ENCODE measurements at regions of chr20 and their contacts with region 1.

Region 1: DNA sequence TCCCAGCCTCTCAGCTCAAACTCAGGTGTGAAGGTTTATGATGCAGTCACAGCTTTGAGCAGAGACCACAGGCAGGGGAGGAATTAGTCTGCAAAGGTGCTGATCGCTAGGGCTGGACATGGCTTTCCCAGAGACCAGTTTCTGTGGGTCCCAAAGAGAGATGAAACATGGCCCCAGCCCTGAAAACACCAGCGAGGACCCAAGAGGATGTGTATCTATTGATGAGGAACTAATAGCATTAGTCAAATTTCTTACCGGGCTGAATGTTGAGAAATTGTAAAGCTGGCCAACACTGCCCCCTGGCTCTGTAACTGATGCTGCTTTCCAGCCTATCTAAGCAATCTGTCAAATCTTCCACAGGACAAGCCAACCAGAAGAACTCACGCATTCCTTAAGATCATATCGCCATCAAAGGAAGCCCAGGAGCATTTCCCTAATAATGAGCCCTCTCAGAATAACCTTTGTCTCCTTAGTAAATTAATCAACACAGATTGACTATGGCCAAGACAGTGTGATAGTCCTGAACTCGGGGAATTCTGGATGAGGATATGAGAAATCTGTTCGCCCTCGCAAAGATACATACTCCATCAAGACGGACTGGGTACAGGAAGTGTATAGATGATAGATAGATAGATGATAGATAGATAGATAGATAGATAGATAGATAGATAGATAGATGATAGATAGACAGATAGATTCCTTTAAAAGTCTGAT is 7.8 kb upstream of the ACSS1 start:
- DNase-seq: no peak
- ATAC-seq: peak; percentile 80 to 90
- H3K4me3 ChIP-seq: no peak overlapping the region
- H3K27ac ChIP-seq: no peak overlapping the region
- H3K4me1 ChIP-seq: peaks cover 9% of the 10 kb centered on the region
- H3K27me3 ChIP-seq: peaks cover 20% of the 10 kb centered on the region
- CTCF ChIP-seq: peak; percentile 81

Region 2: DNA sequence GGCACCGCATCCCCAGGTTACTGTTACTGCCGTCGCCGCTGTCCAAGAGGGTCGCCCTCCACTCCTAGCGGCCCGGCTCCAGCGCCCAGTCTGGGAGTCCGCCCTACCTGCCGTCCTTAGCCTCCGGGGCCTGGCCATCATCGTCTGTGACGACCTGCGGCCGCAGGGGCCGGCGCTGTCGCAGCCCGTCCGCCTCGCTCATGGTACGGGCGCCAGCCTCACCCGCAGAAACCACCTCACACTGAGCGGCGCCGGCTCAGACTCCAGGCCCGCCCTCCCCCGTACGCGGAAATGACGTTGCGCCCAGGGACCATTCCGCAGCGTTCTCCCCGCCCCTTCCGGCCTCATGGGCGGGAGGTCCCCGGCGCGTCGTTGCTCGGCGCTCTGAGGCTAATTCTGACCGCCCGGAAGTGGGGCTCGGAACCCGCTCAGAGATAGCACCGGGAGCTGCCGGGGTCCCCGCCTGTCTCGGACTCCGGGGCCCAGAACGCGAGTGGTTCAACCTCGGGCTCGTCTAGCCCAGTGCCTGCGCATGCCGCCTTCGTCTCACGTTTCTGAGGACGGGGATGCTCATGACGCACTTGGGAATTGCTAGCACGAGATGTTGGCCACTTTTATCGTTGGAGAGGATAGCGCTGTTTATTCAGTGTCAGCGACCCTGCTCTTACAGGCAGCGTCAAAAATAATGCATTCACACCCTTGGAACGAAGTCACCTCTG is 73.1 kb before region 1 on chr20 and contains the start of gene APMAP:
- intact Hi-C with region 1: loop called (anchors 5 kb)
- DNase-seq: peak; percentile 98
- ATAC-seq: peak; percentile 98
- H3K4me3 ChIP-seq: peak within 1 kb of the TSS; percentile 88
- H3K27ac ChIP-seq: peak within 1 kb of the TSS; percentile 96
- H3K4me1 ChIP-seq: peaks cover 36% of the 10 kb centered on the region
- H3K27me3 ChIP-seq: no peaks in the 10 kb centered on the region
- CTCF ChIP-seq: peak; percentile 7
- total RNA-seq, gene APMAP: 82.9 TPM

Measured in lower lobe of right lung (tissue), 2 donors.